ENCODE measurements at regions of chr2 and their contacts with region 1.

Region 1: GRCh38 chr2:54723131-54723995 is at the start of gene EML6:
- DNase-seq: peak; percentile 99
- ATAC-seq: peak; percentile 95
- H3K4me3 ChIP-seq: peak within 1 kb of the TSS; percentile 51 to 98 (median 79)
- H3K4me3 Mint-ChIP-seq: peak within 1 kb of the TSS; percentile 100
- H3K27ac ChIP-seq: peak within 1 kb of the TSS in 1 of 2 donors; percentile 59
- H3K27ac Mint-ChIP-seq: peak within 1 kb of the TSS; percentile 94
- H3K4me1 ChIP-seq: peaks cover 15 to 17% of the 10 kb centered on the region in 2 donors
- H3K4me1 Mint-ChIP-seq: peaks cover 37% of the 10 kb centered on the region
- H3K27me3 ChIP-seq: peaks cover 0 to 27% (median 8%) of the 10 kb centered on the region in 4 experiments
- H3K27me3 Mint-ChIP-seq: peaks cover 13% of the 10 kb centered on the region
- CTCF ChIP-seq: peak; percentile 50
- total RNA-seq, gene EML6: 47.2 and 53.7 TPM in 2 replicates

Region 2: DNA sequence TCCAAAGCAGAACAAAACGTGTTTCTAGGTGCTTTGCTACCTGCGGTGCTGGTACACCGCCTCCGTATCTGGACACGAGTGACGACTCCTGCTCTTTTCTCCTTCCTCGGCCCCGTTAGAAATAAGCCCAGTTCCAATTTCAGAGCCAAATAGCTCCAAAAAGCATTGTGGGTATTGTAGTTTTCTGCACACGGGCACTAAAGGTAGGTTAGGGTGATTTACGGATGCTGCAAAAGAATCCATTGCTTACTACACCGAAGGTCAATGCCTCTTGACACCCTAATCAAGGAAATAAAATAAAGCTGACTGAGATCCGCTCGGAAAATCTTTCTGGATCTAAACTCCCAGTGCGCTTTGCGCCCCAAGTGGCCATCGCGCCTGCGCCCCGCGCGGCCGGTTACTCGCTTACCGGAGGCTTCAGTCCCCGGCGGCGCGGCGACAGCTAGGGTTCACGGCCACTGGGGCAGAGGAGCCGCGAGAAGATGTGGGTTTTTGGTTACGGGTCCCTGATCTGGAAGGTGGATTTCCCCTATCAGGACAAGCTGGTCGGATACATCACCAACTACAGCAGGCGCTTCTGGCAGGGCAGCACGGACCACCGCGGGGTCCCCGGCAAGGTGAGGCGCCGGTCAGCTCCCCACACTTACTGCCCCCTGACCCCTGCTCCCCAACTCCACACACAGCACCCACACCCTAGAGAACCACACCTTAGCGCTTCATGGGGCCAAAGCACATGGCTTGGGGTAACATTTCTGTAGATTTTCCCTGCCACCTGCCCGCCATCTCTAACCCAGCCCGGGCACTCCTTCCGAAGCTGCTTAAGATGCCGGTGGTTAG is 955.7 kb before region 1 on chr2 and contains the start of gene CHAC2:
- CTCF ChIA-PET with region 1: no interaction called
- POLR2A ChIA-PET with region 1: no interaction called
- intact Hi-C with region 1: loop called (anchors 5 kb)
- DNase-seq: peak; percentile 93
- ATAC-seq: peak; percentile 93
- H3K4me3 ChIP-seq: peak within 1 kb of the TSS; percentile 81 to 99 (median 89)
- H3K4me3 Mint-ChIP-seq: peak within 1 kb of the TSS; percentile 89
- H3K27ac ChIP-seq: peak within 1 kb of the TSS; percentile 93 to 97
- H3K27ac Mint-ChIP-seq: peak within 1 kb of the TSS; percentile 95
- H3K4me1 ChIP-seq: peaks cover 7 to 10% of the 10 kb centered on the region in 2 donors
- H3K4me1 Mint-ChIP-seq: peaks cover 31% of the 10 kb centered on the region
- H3K27me3 ChIP-seq: no peaks in the 10 kb centered on the region
- H3K27me3 Mint-ChIP-seq: no peaks in the 10 kb centered on the region
- CTCF ChIP-seq: no peak
- total RNA-seq, gene CHAC2: 2.1 and 3.2 TPM in 2 replicates

Region 3: GRCh38 chr2:54115284-54116137 is 607.9 kb before region 1 on chr2 and contains the start of gene ACYP2:
- CTCF ChIA-PET with region 1: no interaction called
- POLR2A ChIA-PET with region 1: no interaction called
- intact Hi-C with region 1: loop called (anchors 1 kb)
- DNase-seq: peak; percentile 96
- ATAC-seq: peak; percentile 82
- H3K4me3 ChIP-seq: peak within 1 kb of the TSS; percentile 75 to 97 (median 85)
- H3K4me3 Mint-ChIP-seq: peak within 1 kb of the TSS; percentile 98
- H3K27ac ChIP-seq: peak within 1 kb of the TSS; percentile 97 to 99
- H3K27ac Mint-ChIP-seq: peak within 1 kb of the TSS; percentile 100
- H3K4me1 ChIP-seq: peaks cover 7% of the 10 kb centered on the region in 2 donors
- H3K4me1 Mint-ChIP-seq: peaks cover 16% of the 10 kb centered on the region
- H3K27me3 ChIP-seq: no peaks in the 10 kb centered on the region
- H3K27me3 Mint-ChIP-seq: no peaks in the 10 kb centered on the region
- CTCF ChIP-seq: no peak
- total RNA-seq, gene ACYP2: 14.0 and 16.4 TPM in 2 replicates

Region 4: DNA sequence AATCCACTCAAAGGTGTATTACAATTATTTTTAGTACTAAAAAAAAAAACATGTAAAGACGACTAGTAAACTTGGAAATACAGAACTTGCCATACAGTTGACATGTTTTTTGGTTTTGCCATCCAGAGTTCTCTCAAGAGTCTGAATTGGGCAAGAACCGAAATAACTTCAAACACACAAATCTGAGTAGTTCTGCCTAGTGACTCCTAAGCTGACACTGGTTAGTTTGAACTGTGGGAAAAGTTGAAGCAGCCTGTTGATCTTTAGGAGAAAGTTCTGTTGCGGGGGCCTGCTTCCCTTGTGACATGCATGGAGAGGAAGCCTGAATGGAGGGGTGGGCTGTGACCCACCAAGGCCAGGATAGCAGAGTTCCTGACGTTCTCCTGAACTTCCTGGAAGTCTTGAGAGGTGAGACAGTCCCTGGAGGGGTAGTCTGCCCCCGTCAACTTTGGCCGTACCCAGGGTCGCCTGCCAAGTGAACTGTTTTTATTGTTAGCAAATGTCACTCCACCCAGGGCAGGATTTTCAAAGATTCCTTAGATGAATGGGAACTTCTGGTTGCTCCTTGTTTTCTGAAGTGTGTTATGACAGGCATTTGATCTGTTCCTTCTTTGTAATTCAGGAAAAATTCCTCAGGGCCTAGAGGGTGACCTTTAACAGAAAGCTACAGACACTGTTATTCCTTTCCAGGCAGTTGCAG is 352.8 kb before region 1 on chr2:
- CTCF ChIA-PET with region 1: no interaction called
- POLR2A ChIA-PET with region 1: no interaction called
- intact Hi-C with region 1: no loop called
- DNase-seq: no peak
- ATAC-seq: no peak
- H3K4me3 ChIP-seq: no peak overlapping the region
- H3K4me3 Mint-ChIP-seq: no peak overlapping the region
- H3K27ac ChIP-seq: no peak overlapping the region
- H3K27ac Mint-ChIP-seq: no peak overlapping the region
- H3K4me1 ChIP-seq: no peaks in the 10 kb centered on the region
- H3K4me1 Mint-ChIP-seq: no peaks in the 10 kb centered on the region
- H3K27me3 ChIP-seq: peaks cover 0 to 5% (median 0%) of the 10 kb centered on the region in 4 experiments
- H3K27me3 Mint-ChIP-seq: peaks cover 26% of the 10 kb centered on the region
- CTCF ChIP-seq: no peak

Region 5: GRCh38 chr2:54570925-54571694 is 152.3 kb before region 1 on chr2:
- CTCF ChIA-PET with region 1: no interaction called
- POLR2A ChIA-PET with region 1: no interaction called
- intact Hi-C with region 1: loop called (anchors 1 kb)
- DNase-seq: peak; percentile 83
- ATAC-seq: peak; percentile 42
- H3K4me3 ChIP-seq: peak overlapping the region in 3 of 5 experiments; percentile 1 to 56 (median 32)
- H3K4me3 Mint-ChIP-seq: peak overlapping the region; percentile 83
- H3K27ac ChIP-seq: peak overlapping the region; percentile 92 to 93
- H3K27ac Mint-ChIP-seq: peak overlapping the region; percentile 97
- H3K4me1 ChIP-seq: peaks cover 92 to 93% of the 10 kb centered on the region in 2 donors
- H3K4me1 Mint-ChIP-seq: peaks cover 92% of the 10 kb centered on the region
- H3K27me3 ChIP-seq: no peaks in the 10 kb centered on the region
- H3K27me3 Mint-ChIP-seq: no peaks in the 10 kb centered on the region
- CTCF ChIP-seq: no peak

Region 6: GRCh38 chr2:54838585-54839035 is 115.2 kb after region 1 on chr2:
- CTCF ChIA-PET with region 1: interaction called, 28 read pairs
- POLR2A ChIA-PET with region 1: interaction called, 3 read pairs
- intact Hi-C with region 1: loop called (anchors 1 kb)
- DNase-seq: peak; percentile 78
- ATAC-seq: peak; percentile 83
- H3K4me3 ChIP-seq: no peak overlapping the region
- H3K4me3 Mint-ChIP-seq: no peak overlapping the region
- H3K27ac ChIP-seq: no peak overlapping the region
- H3K27ac Mint-ChIP-seq: peak overlapping the region; percentile 46
- H3K4me1 ChIP-seq: peaks cover 0 to 4% of the 10 kb centered on the region in 2 donors
- H3K4me1 Mint-ChIP-seq: peaks cover 4% of the 10 kb centered on the region
- H3K27me3 ChIP-seq: no peaks in the 10 kb centered on the region
- H3K27me3 Mint-ChIP-seq: no peaks in the 10 kb centered on the region
- CTCF ChIP-seq: peak; percentile 97

Region 7: DNA sequence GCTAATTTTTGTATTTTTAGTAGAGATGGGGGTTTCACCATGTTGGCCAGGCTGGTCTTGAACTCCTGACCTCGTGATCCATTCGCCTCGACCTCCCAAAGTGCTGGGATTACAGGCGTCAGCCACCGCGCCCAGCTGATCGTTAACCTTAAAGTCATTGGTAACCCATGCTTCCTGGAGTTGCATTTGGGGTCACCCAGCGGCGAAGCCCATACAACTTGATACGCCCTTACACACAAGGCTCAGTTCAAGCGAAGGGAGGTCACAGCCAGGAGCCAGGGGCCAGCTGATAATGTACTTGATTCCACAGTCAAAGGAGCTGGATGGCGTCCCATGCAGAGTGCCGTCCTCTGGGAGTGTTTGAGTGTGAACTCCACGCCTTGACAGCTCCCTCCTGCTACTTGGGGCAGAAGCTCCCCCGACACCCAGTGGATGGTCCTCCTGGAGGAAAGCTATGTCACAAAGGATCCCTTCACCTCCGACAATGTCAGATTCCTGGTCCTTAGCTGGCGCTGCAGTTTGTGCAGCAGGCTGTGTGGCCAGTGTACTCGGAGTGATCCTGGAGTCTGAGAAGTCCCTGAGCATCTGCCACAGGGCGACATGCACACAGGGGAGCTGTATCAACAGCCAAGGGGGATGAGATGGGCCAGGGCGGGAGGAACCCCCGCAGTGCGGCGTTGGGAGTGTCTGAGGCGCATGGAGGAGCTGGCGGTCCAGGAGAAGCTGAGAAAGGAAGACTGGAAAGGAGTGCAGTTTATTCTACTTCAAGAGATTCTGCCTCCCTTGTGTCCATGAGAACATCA is 500.8 kb after region 1 on chr2:
- CTCF ChIA-PET with region 1: no interaction called
- POLR2A ChIA-PET with region 1: no interaction called
- intact Hi-C with region 1: loop called (anchors 1 kb)
- DNase-seq: peak; percentile 50
- ATAC-seq: no peak
- H3K4me3 ChIP-seq: peak overlapping the region in 4 of 5 experiments; percentile 54 to 73 (median 68)
- H3K4me3 Mint-ChIP-seq: peak overlapping the region; percentile 83
- H3K27ac ChIP-seq: peak overlapping the region; percentile 77 to 86
- H3K27ac Mint-ChIP-seq: peak overlapping the region; percentile 90
- H3K4me1 ChIP-seq: peaks cover 16 to 24% of the 10 kb centered on the region in 2 donors
- H3K4me1 Mint-ChIP-seq: peaks cover 26% of the 10 kb centered on the region
- H3K27me3 ChIP-seq: no peaks in the 10 kb centered on the region
- H3K27me3 Mint-ChIP-seq: no peaks in the 10 kb centered on the region
- CTCF ChIP-seq: no peak

Measured in B cell (primary cell).